ENCODE measurements at regions of chr7 and their contacts with region 1.

Region 1: DNA sequence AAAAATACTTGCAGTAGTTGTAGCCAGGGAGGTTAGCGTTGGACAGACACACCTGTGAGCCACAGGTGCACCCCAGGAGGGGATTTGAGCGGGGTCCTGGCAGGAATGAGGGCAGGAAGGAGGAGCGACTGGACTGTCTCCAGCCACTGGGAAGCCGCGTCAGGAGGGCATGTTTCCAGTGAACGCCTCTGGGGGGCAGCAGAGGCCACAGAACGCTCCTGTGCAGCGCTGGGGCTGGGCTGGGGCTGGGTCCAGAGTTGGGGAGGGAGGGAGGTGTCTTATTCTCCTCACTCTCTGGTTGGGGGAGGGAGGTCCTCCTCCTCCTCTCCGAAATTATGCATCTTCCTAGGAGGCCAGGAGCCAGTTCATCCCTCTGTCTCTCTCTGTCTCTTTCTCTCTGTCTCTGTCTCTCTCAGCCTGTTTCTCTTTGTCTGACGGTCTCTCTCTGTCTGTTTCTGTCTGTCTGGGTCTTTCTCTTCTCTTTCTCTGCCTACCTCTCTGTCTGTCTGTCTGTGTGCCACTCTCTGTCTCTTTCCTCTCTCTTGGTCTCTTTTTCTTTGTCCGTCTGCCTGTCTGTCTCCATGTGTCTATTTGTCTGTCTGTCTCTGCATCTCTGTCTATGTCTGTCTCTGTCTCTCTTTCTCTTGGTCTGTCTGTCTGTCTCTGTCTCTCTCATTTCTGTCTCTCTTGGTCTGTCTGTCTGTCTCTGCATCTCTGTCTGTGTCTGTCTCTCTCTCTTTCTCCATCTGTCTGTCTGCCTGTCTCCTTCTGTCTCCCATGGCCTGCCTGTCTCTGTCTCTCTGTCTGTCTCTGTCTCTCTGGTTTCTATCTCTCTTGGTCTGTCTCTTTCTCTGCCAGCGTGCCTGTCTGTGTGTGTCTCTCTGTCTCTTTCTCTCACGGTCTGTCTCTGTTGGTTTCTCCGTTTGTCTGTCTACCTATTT is 9.9 kb upstream of the PSMG3 start:
- DNase-seq: peak; percentile 53 to 80
- H3K4me3 ChIP-seq: no peak overlapping the region
- H3K27ac ChIP-seq: no peak overlapping the region
- H3K4me1 ChIP-seq: peaks cover 0 to 7% (median 0%) of the 10 kb centered on the region in 4 donors
- H3K27me3 ChIP-seq: no peaks in the 10 kb centered on the region
- CTCF ChIP-seq: peak; percentile 78 to 82

Region 2: DNA sequence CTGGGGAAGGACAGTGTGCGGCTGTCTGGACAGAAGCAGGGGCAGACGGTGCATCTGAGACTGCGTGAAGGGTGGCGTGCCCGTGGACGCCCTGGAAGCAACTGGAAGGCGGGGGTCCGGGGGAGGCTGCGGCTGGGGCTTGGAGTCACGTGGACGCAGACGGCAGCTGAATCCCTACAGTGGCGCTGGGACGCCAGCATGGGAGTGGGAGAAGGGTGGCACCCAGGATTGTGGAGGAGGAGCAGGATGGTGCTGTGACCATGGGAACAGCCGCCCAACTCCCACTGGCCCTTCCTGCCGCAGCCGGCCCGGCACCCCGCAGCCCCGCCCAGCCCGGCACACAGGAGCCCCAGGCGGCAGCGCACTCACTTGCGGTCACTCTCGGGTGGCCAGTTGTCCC is 85.3 kb before region 1 on chr7:
- intact Hi-C with region 1: no loop called
- DNase-seq: no peak
- H3K4me3 ChIP-seq: no peak overlapping the region
- H3K27ac ChIP-seq: no peak overlapping the region
- H3K4me1 ChIP-seq: no peaks in the 10 kb centered on the region
- H3K27me3 ChIP-seq: no peaks in the 10 kb centered on the region
- CTCF ChIP-seq: no peak

Region 3: GRCh38 chr7:1558181-1558811 is 21.5 kb before region 1 on chr7:
- intact Hi-C with region 1: no loop called
- DNase-seq: no peak
- H3K4me3 ChIP-seq: no peak overlapping the region
- H3K27ac ChIP-seq: no peak overlapping the region
- H3K4me1 ChIP-seq: peaks cover 0 to 34% (median 7%) of the 10 kb centered on the region in 4 donors
- H3K27me3 ChIP-seq: peaks cover 0 to 54% of the 10 kb centered on the region in 2 donors
- CTCF ChIP-seq: peak; percentile 17 to 30

Region 4: GRCh38 chr7:1709900-1710299 is 130.1 kb after region 1 on chr7:
- intact Hi-C with region 1: loop called (anchors 10 kb)
- DNase-seq: no peak
- H3K4me3 ChIP-seq: no peak overlapping the region
- H3K27ac ChIP-seq: no peak overlapping the region
- H3K4me1 ChIP-seq: no peaks in the 10 kb centered on the region
- H3K27me3 ChIP-seq: peaks cover 0 to 41% of the 10 kb centered on the region in 2 donors
- CTCF ChIP-seq: no peak

Region 5: GRCh38 chr7:2209146-2209960 is 629.6 kb after region 1 on chr7:
- intact Hi-C with region 1: loop called (anchors 2 kb)
- DNase-seq: peak; percentile 46 to 76
- H3K4me3 ChIP-seq: no peak overlapping the region
- H3K27ac ChIP-seq: no peak overlapping the region
- H3K4me1 ChIP-seq: peaks cover 0 to 12% (median 5%) of the 10 kb centered on the region in 4 donors
- H3K27me3 ChIP-seq: no peaks in the 10 kb centered on the region
- CTCF ChIP-seq: peak; percentile 72 to 76